ENCODE measurements at regions of chr17 and their contacts with region 1.

Region 1: DNA sequence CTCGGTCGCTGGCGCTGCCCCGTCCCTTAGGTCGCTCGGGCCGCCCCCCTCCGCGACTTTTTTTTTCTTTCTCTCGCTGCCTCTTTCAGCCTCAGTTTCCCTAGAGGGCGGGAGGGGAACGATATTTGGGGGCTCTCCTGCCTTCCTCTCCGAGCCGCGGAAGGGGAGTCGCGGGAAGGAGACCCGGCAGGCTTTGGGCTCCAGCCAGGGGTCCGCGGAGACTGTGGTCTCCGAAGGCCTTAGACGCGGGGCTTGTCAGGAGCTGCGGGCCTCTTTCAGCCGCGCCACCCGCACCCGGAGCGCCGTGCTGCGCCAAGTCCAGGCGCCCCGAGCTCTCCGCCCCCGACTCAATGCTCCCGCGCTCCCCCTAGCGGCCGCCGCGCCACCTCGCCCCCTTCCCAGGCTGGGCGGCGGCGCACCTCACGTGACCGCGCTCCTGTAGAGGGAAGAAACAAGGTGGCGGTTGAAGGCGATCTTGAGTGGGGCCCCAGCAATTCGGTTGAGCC is at the start of gene LRRC37B:
- DNase-seq: peak; percentile 91 to 96
- ATAC-seq: peak; percentile 99
- H3K4me3 ChIP-seq: peak within 1 kb of the TSS; percentile 74 to 83
- H3K27ac ChIP-seq: peak within 1 kb of the TSS in 1 of 2 donors; percentile 52
- H3K4me1 ChIP-seq: no peaks in the 10 kb centered on the region
- H3K27me3 ChIP-seq: no peaks in the 10 kb centered on the region
- total RNA-seq, gene LRRC37B: 15.4 to 30.2 TPM

Region 2: GRCh38 chr17:31967648-31968047 is 39.4 kb before region 1 on chr17:
- intact Hi-C with region 1: no loop called
- DNase-seq: no peak
- ATAC-seq: no peak
- H3K4me3 ChIP-seq: no peak overlapping the region
- H3K27ac ChIP-seq: no peak overlapping the region
- H3K4me1 ChIP-seq: no peaks in the 10 kb centered on the region
- H3K27me3 ChIP-seq: no peaks in the 10 kb centered on the region

Region 3: DNA sequence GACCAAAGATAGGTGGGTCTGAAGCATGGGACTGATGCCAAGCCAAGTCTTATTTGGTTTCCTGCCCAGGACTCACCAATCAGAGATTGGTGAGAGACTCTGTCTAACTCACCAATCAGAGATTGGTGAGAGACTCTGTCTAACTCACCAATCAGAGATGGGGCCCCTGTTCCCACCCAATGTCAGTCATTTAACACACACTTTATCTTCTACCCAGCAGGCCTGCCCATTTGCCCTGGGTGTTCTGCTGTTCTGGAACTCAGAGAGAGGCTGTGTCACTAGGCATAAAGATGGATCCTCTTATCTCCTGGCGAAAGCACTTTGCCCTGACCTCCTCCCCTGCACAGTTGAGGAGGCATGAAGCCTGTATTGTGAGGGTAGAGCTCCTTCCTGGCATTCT is 129.8 kb after region 1 on chr17:
- intact Hi-C with region 1: loop called (anchors 5 to 10 kb)
- DNase-seq: no peak
- ATAC-seq: no peak
- H3K4me3 ChIP-seq: no peak overlapping the region
- H3K27ac ChIP-seq: no peak overlapping the region
- H3K4me1 ChIP-seq: no peaks in the 10 kb centered on the region
- H3K27me3 ChIP-seq: no peaks in the 10 kb centered on the region

Region 4: DNA sequence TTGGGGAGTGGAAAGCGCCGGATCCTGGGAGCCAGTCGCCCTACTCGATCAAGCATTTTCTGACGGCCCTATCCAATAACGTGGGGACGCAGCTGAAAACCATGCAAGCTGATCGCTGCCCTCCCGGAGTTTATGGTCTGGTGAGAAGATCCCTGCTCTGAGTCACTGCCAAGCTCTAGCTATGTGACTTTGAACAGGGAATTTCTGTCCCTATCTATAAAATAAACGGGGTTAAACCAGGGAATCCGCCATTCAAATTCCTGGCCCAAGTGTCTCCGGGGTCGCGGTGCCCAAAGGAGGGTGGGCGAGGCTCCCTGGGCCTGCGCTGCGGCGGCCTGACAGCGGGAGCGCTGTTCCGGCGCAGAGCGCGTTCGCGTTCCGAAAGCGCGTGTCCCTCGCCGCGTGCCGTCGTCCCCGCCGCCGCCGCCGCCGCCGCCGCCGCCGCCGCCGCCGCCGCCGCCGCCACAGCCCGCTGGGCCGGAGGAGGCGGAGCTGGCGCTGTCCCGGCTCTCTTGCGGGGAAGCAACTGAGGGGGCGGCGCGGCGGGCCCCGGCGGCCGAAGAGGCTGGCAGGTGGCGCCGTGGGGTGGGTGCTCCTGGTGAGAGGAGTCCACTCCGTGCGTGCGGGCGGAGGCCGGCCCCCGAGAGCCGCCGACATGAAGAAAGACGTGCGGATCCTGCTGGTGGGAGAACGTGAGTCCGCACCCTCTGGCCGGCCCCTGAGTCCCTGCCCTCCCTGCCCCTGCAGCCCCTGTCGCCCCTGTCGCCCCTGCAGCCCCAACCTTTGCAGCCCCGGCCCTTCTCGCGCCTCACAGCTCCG is 135.2 kb after region 1 on chr17 and contains the start of gene RHOT1:
- intact Hi-C with region 1: loop called (anchors 5 to 10 kb)
- DNase-seq: peak; percentile 82 to 92
- ATAC-seq: peak; percentile 94
- H3K4me3 ChIP-seq: peak within 1 kb of the TSS; percentile 87 to 91
- H3K27ac ChIP-seq: peak within 1 kb of the TSS; percentile 66 to 87
- H3K4me1 ChIP-seq: peaks cover 0 to 4% of the 10 kb centered on the region in 2 donors
- H3K27me3 ChIP-seq: no peaks in the 10 kb centered on the region
- total RNA-seq, gene RHOT1: 36.0 to 42.0 TPM